ENCODE measurements at regions of chr1 and their contacts with region 1.

Region 1: GRCh38 chr1:45569962-45570581 is 13.8 kb upstream of the NASP start:
- DNase-seq: peak; percentile 77
- ATAC-seq: peak; percentile 99
- H3K4me3 Mint-ChIP-seq: no peak overlapping the region
- H3K27ac Mint-ChIP-seq: no peak overlapping the region
- H3K4me1 Mint-ChIP-seq: no peaks in the 10 kb centered on the region
- H3K27me3 Mint-ChIP-seq: no peaks in the 10 kb centered on the region
- CTCF ChIP-seq: peak; percentile 94

Region 2: DNA sequence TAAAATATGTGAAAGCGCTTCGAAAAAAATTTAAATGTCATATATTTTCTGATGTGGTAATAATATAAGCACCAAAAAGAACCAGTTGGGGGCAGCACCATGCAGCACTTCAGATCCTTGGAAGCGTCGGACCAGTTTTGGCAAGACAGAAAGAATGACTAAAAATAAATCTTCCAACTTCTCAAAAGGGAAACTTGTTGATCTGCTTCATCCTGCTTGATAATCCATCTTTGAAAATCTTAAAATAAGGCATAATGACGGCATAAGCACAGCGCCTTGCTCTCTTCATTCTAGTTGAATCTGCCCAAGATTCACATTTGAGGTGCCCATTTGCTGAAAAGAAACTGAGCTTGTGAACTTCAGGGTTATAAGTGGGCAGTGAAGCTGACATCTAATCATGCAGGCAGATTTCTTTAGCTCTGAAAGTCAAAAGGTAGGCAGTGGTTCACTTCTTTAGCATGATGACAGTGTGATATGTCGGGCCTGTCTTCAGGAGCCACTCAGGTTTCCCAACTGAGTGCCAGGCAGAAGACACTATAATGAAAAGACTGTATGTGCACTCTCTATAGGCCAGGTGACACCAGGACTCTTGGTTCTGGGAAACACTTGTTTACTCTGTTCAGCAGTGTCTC is 210.1 kb before region 1 on chr1:
- CTCF ChIA-PET with region 1: interaction called, 13 read pairs
- POLR2A ChIA-PET with region 1: no interaction called
- intact Hi-C with region 1: no loop called
- DNase-seq: peak; percentile 80
- ATAC-seq: peak; percentile 68
- H3K4me3 Mint-ChIP-seq: no peak overlapping the region
- H3K27ac Mint-ChIP-seq: no peak overlapping the region
- H3K4me1 Mint-ChIP-seq: peaks cover 7% of the 10 kb centered on the region
- H3K27me3 Mint-ChIP-seq: no peaks in the 10 kb centered on the region
- CTCF ChIP-seq: peak; percentile 75

Region 3: GRCh38 chr1:45403298-45403697 is 166.8 kb before region 1 on chr1:
- CTCF ChIA-PET with region 1: no interaction called
- POLR2A ChIA-PET with region 1: no interaction called
- intact Hi-C with region 1: no loop called
- DNase-seq: no peak
- ATAC-seq: no peak
- H3K4me3 Mint-ChIP-seq: no peak overlapping the region
- H3K27ac Mint-ChIP-seq: no peak overlapping the region
- H3K4me1 Mint-ChIP-seq: no peaks in the 10 kb centered on the region
- H3K27me3 Mint-ChIP-seq: no peaks in the 10 kb centered on the region
- CTCF ChIP-seq: no peak

Region 4: DNA sequence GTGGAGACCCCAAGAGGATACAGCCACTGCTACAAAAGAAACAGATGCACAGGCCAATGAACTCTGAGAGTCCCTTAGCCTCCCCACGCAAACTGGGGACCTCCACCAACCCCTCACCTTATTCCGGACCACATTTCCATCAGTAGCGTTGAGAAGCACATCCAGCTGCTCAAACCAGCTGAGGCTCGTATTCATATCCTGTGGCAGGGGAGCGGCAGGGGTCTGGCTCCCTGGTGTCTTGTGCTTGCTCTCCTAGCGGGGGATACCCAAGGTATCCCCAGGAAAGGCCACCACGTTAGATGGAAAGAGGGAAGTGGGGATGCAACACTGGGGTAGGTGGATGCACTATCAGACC is 70.7 kb before region 1 on chr1:
- CTCF ChIA-PET with region 1: interaction called, 32 read pairs
- POLR2A ChIA-PET with region 1: interaction called, 4 read pairs
- intact Hi-C with region 1: no loop called
- DNase-seq: peak; percentile 39
- ATAC-seq: no peak
- H3K4me3 Mint-ChIP-seq: peak overlapping the region; percentile 98
- H3K27ac Mint-ChIP-seq: peak overlapping the region; percentile 93
- H3K4me1 Mint-ChIP-seq: peaks cover 29% of the 10 kb centered on the region
- H3K27me3 Mint-ChIP-seq: no peaks in the 10 kb centered on the region
- CTCF ChIP-seq: peak; percentile 28

Region 5: GRCh38 chr1:45521398-45522323 is 48.4 kb before region 1 on chr1 and contains the start of gene PRDX1:
- CTCF ChIA-PET with region 1: interaction called, 68 read pairs
- POLR2A ChIA-PET with region 1: interaction called, 27 read pairs
- intact Hi-C with region 1: no loop called
- DNase-seq: peak; percentile 96
- ATAC-seq: peak; percentile 92
- H3K4me3 Mint-ChIP-seq: peak within 1 kb of the TSS; percentile 97
- H3K27ac Mint-ChIP-seq: peak within 1 kb of the TSS; percentile 95
- H3K4me1 Mint-ChIP-seq: peaks cover 38% of the 10 kb centered on the region
- H3K27me3 Mint-ChIP-seq: peaks cover 1% of the 10 kb centered on the region
- CTCF ChIP-seq: no peak
- total RNA-seq, gene PRDX1: 547 to 553 TPM

Region 6: DNA sequence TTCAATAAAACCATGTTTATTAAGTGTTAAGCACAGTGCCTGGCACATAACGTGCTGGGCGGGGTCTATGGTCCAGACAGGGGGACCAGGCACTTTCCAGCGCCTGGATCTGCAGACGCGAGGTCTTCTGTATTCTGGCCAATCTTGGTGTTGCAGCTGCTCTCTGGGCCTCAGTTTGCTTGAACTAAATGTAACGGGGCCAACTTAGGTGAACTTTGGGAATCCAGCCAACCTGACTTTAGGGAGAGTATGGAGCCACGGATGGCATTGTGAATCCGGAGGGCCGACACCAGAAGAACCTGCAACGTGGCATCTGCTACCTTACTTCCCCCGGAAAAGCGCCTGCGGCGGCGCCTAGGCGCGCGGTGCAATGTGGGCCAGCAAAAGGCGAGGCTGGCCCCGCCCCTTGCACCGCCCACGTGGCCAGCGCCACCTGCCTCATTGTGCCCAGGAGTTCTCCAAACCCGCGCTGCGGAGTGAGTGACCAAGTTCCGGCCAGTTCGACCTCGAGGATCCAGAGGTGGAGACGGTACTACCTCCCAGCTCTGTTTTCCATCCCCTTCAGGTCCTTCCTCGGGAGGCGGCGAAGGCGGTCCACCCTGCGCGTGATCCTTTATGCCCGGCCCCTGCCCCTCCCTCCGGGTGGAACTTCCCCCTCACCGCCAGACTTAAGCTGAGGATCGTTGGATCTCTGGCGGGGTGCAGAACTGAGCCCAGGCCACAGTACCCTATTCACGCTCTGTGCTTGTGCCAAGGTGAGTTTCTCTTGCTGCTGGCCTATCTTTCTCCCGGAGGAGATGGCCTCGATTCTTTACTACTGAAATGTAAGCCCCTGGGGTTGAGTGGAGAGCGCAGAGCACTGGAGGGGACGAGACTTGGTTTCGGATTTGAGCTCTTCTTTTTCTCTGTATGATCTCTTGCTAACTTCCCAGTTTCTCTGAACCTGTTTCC is 19.4 kb before region 1 on chr1 and contains the start of gene AKR1A1:
- CTCF ChIA-PET with region 1: interaction called, 23 read pairs
- POLR2A ChIA-PET with region 1: interaction called, 10 read pairs
- intact Hi-C with region 1: no loop called
- DNase-seq: peak; percentile 93
- ATAC-seq: peak; percentile 94
- H3K4me3 Mint-ChIP-seq: peak within 1 kb of the TSS; percentile 100
- H3K27ac Mint-ChIP-seq: peak within 1 kb of the TSS; percentile 98
- H3K4me1 Mint-ChIP-seq: peaks cover 25% of the 10 kb centered on the region
- H3K27me3 Mint-ChIP-seq: peaks cover 1% of the 10 kb centered on the region
- CTCF ChIP-seq: no peak
- total RNA-seq, gene AKR1A1: 184 to 186 TPM

Region 7: DNA sequence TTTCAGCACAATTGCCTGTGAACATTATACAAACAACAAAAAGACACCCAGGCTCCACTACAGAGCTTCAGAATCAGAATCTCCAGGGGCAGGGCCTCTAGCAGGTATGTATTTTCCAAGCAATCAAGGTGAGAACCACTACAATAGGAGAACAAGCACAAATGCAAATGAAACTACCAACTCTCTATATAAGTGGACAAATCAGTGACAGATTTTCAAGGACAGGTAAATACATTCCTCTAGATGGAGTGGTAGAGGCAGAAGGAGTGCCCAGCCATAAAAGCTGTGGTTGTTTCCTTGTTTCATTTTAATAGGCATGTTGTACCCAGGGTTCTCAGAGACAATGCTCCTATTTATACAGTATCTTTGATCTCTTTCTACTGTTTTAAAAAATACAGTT is 73.9 kb after region 1 on chr1:
- CTCF ChIA-PET with region 1: no interaction called
- POLR2A ChIA-PET with region 1: no interaction called
- intact Hi-C with region 1: no loop called
- DNase-seq: no peak
- ATAC-seq: no peak
- H3K4me3 Mint-ChIP-seq: no peak overlapping the region
- H3K27ac Mint-ChIP-seq: no peak overlapping the region
- H3K4me1 Mint-ChIP-seq: no peaks in the 10 kb centered on the region
- H3K27me3 Mint-ChIP-seq: no peaks in the 10 kb centered on the region
- CTCF ChIP-seq: no peak

Measured in activated CD8-positive, alpha-beta T cell treated with anti-CD3 and anti-CD28 coated beads for 36 hours (primary cell).